Activated CD4-positive, alpha-beta T cell treated with anti-CD3 and anti-CD28 coated beads, Interleukin-2, amount 10 ng/mL, durations not matched to agents 24 days and 14 days (primary cell): ENCODE measurements at regions of chr7 and their contacts with region 1.

Region 1: GRCh38 chr7:107661081-107661864 is 645 bp downstream of the SLC26A4 start:
- DNase-seq: peak; percentile 90
- H3K4me3 Mint-ChIP-seq: peak overlapping the region; percentile 97
- H3K27ac Mint-ChIP-seq: peak overlapping the region; percentile 90
- H3K4me1 Mint-ChIP-seq: peaks cover 41% of the 10 kb centered on the region
- H3K27me3 Mint-ChIP-seq: no peaks in the 10 kb centered on the region

Region 2: DNA sequence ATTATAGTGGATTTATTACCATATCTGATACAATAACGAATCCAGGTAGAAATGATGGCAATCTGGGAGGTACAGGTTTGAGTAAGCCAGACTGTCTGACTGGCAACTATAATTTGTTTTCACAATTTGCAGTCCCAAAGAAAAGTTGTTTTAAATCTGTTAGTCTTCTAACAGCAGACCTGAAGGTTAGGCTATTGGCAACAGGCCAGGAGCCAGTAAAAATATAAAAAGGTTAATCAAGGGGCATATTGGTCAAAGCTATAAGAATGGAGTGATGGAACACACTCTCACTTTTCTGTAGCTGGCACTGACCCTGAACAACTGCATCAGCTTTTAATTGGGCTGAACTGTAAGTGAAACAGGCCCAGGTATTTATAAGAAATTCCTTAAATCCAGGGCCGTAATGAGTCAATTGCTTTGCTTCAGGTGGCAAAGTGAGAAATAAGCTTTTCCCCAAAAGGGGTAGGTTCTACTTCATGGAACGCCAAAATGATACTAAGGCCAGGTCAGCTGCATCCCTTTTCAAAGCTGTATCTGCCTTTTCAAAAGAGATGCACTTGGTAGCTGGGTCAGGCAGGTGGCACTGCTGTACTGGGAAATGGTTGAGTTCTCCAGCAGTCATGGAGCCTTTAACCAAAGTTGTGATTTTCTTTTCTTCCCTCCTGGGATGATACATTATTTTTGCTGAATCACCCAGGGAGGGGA is 198.4 kb before region 1 on chr7:
- intact Hi-C with region 1: loop called (anchors 10 kb)
- DNase-seq: peak; percentile 84
- H3K4me3 Mint-ChIP-seq: no peak overlapping the region
- H3K27ac Mint-ChIP-seq: no peak overlapping the region
- H3K4me1 Mint-ChIP-seq: no peaks in the 10 kb centered on the region
- H3K27me3 Mint-ChIP-seq: no peaks in the 10 kb centered on the region

Region 3: DNA sequence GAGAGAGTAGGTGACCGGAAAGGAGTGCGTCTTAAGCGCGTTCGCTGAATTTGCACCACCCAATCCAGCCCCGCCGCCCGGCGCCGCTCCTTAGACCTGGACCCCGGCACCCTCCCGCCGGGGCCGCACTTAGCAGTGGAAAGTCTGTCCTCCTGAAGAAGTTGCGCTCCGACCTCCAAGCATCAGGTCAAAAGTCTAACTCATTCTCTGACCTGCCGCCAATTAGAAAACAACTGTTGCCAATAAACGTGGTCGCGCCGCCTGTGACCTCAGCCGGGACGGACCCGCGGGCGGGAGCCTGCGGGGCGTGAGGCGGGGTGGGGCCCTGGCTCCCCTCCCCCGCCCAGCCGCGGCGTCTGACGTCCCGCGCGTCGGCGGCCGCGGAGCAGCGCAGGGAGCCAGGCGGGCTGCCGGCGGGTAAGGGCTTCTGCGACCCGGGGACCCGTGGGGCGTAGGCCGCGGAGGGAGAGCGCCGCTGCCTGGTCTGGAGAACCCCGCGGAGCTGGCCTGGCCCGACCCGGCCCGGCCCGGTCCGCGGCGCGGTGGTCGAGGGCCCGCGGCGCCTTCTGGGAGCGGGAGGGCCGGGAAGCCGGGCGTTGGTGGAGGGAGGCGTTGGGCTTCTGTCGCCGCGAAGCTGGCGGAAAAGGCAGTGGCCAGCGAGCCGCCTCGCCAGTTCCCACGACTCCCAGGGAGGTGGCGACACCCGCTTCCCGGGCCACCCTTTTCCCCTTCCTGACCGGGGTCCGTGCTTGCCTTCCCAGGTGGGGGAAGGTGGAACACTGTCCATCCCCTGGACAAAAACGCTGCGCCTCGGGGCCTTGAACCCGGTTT is 81.2 kb before region 1 on chr7 and contains the start of gene BCAP29:
- intact Hi-C with region 1: loop called (anchors 1 kb)
- DNase-seq: peak; percentile 92
- H3K4me3 Mint-ChIP-seq: peak within 1 kb of the TSS; percentile 91
- H3K27ac Mint-ChIP-seq: peak within 1 kb of the TSS; percentile 91
- H3K4me1 Mint-ChIP-seq: peaks cover 25% of the 10 kb centered on the region
- H3K27me3 Mint-ChIP-seq: no peaks in the 10 kb centered on the region
- total RNA-seq, gene BCAP29: 43.6 and 52.0 TPM in 2 replicates

Region 4: GRCh38 chr7:107638594-107638993 is 22.7 kb before region 1 on chr7:
- intact Hi-C with region 1: loop called (anchors 1 kb)
- DNase-seq: no peak
- H3K4me3 Mint-ChIP-seq: peak overlapping the region; percentile 37
- H3K27ac Mint-ChIP-seq: peak overlapping the region; percentile 72
- H3K4me1 Mint-ChIP-seq: peaks cover 40% of the 10 kb centered on the region
- H3K27me3 Mint-ChIP-seq: peaks cover 2% of the 10 kb centered on the region

Region 5: DNA sequence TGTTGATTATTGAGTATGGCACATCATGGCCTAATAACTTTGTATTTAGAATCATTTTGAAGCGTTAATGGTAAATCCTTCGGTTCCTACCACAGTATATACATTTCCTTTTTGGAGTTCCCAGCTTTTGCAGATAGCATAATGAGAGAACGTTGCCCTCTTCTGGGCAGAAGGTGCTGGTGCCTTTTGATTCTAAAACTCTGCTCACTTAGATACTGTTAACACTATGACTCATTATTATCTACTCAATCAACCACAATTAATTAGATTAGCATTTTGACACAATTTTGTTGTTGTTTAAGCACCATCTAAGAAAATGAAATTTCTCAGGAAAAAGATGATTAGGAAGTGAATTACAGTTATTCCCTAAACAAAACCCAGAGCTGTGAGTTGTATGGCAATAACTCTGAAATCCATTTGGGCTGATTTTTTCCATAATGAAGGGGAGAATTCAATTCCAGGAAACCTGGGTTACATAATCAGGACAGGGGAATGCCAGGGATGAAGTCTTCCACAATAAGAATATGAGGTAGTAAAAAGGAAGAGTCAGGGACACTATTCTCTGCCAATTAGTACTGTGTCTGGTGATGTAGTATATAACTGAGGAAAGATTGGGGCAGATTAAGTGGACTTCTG is 218.2 kb after region 1 on chr7:
- intact Hi-C with region 1: loop called (anchors 5 kb)
- DNase-seq: peak; percentile 79
- H3K4me3 Mint-ChIP-seq: no peak overlapping the region
- H3K27ac Mint-ChIP-seq: no peak overlapping the region
- H3K4me1 Mint-ChIP-seq: peaks cover 15% of the 10 kb centered on the region
- H3K27me3 Mint-ChIP-seq: peaks cover 21% of the 10 kb centered on the region